Activated T-helper 2 cell treated with anti-CD3 and anti-CD28 coated beads, Interferon-gamma antibody, Interleukin-2, Interleukin-4, amounts not matched to agents 10 μg/mL and 5 μg/mL and 100 μg/mL, durations not matched to agents 14 hours and 24 hours and 36 hours (primary cell): ENCODE measurements at regions of chr2 and their contacts with region 1.

Region 1: DNA sequence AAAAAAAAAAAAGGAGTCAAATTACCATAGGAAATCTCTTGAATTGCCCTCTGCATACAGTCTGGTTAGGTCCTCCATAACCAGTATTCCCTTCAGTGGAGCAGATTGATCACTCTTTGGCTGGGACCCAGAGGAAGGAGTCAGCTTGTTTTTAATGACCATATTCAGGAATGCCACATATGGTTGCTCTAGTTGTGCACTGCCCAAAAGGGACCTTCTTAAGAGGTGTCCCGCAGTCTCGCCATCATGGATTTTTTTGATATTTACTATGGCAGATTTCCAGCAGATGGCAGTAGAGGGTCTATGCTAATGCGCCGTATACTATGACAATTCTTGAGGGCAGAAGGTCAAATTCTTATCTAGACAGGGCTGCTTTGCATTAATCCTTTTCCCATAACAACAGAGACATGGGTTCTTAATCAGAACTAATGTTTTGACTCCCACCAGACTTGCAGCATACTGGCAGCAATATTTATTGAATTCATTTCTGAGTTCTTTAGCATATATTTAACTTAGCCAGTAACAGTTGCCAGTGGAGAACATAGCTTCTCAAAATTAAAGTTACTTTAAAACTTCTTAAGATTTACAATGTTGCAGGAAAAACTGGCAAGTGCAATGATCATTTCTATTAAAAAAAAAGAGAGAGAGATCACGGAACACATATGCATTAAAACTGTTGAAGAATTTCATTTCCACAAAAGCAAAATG is 31.8 kb upstream of the INPP4A start:
- DNase-seq: peak; percentile 43
- H3K4me3 Mint-ChIP-seq: no peak overlapping the region
- H3K27ac Mint-ChIP-seq: no peak overlapping the region
- H3K4me1 Mint-ChIP-seq: peaks cover 8% of the 10 kb centered on the region
- H3K27me3 Mint-ChIP-seq: peaks cover 9% of the 10 kb centered on the region

Region 2: GRCh38 chr2:98118161-98118560 is 294.7 kb before region 1 on chr2:
- intact Hi-C with region 1: no loop called
- DNase-seq: no peak
- H3K4me3 Mint-ChIP-seq: no peak overlapping the region
- H3K27ac Mint-ChIP-seq: no peak overlapping the region
- H3K4me1 Mint-ChIP-seq: peaks cover under 1% of the 10 kb centered on the region
- H3K27me3 Mint-ChIP-seq: peaks cover 17% of the 10 kb centered on the region

Region 3: GRCh38 chr2:98518090-98518489 is 105.2 kb after region 1 on chr2:
- intact Hi-C with region 1: loop called (anchors 1 kb)
- DNase-seq: peak; percentile 23
- H3K4me3 Mint-ChIP-seq: no peak overlapping the region
- H3K27ac Mint-ChIP-seq: no peak overlapping the region
- H3K4me1 Mint-ChIP-seq: peaks cover 44% of the 10 kb centered on the region
- H3K27me3 Mint-ChIP-seq: no peaks in the 10 kb centered on the region

Region 4: DNA sequence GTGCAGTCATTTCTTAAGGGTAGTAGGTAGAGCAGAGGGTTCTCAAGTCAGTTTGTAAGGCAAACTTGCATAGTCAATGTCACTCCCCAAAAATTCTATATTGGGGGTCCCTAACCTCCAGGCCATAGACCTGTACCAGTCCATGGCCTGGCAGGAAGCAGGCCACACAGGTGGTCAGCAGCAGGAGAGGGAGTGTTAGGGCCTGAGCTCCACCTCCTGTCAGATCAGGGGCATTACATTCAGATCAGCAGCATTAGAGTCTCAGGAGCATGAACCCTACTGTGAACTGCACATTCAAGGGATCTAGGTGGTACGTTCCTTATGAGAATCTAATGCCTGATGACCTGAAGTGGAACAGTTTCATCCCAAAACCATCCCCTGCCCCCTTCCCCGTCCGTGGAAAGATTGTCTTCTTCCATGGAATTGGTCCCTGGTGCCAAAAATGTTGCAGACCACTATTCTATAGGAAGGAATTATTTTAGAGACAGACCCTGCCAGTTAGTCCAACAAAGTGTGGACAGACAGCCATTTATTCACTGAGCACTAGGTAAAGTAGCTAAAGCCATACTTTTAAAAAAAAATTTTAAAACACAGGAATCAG is 188.7 kb after region 1 on chr2:
- intact Hi-C with region 1: loop called (anchors 2 kb)
- DNase-seq: no peak
- H3K4me3 Mint-ChIP-seq: no peak overlapping the region
- H3K27ac Mint-ChIP-seq: no peak overlapping the region
- H3K4me1 Mint-ChIP-seq: peaks cover 22% of the 10 kb centered on the region
- H3K27me3 Mint-ChIP-seq: no peaks in the 10 kb centered on the region